ENCODE measurements at regions of chr18 and their contacts with region 1.

Region 1: GRCh38 chr18:8800449-8800848 is 95.1 kb downstream of the MTCL1 start:
- DNase-seq: peak; percentile 97
- H3K4me3 ChIP-seq: no peak overlapping the region
- H3K27ac ChIP-seq: peak overlapping the region; percentile 100
- H3K27me3 ChIP-seq: no peaks in the 10 kb centered on the region
- CTCF ChIP-seq: no peak

Region 2: DNA sequence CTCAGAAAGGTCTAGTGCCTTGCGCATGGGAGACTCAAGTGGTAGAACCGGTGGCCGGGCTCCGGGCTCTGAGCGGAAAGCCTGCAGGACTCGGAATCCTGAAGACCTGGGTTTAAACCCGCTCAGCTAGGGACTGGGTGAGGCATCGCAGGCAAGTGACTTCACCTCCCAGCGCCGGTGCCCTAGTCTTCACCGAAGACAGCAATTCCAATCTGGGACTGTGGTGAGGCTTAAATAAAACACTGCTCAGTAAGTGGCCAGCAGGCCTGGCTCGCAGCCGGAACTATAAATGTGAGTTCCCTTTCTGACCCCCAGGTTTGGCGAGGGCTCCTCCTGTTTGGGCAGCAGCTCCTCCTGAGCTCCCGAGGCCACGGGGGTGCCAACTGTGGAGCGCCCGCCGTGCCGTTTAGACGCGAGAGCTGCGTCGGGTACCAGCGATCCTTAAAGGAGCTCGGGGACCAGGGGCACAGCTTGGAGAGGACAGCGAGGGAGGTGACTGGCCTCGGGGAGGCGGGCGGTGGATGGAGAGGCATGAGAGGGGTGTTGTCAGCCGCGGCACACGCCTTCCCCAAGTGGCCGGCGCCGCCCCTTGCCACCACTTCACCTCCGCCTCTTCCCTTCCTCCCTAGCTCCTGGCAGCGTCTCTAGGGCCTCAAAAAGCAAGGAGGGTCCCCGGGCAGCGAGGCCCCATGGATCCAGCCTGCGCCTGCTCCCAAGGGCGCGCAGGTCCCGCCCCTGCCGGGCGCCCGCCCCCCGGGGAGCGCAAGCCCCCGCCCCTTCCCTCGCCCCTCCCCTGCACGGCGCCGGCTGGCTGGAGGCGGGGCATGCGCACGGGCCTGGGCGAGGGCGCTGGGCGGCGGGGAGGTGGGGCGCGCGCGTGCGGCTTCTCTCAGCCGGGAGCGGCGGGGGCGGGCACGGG is 95.8 kb before region 1 on chr18:
- CTCF ChIA-PET with region 1: interaction called, 5 read pairs
- POLR2A ChIA-PET with region 1: interaction called, 16 read pairs
- DNase-seq: peak; percentile 63
- H3K4me3 ChIP-seq: peak overlapping the region; percentile 56
- H3K27ac ChIP-seq: peak overlapping the region; percentile 87
- H3K27me3 ChIP-seq: no peaks in the 10 kb centered on the region
- CTCF ChIP-seq: no peak

Region 3: GRCh38 chr18:8747440-8747937 is 53.0 kb before region 1 on chr18:
- CTCF ChIA-PET with region 1: no interaction called
- POLR2A ChIA-PET with region 1: interaction called, 22 read pairs
- DNase-seq: peak; percentile 88
- H3K4me3 ChIP-seq: no peak overlapping the region
- H3K27ac ChIP-seq: peak overlapping the region; percentile 95
- H3K27me3 ChIP-seq: no peaks in the 10 kb centered on the region
- CTCF ChIP-seq: no peak

Region 4: DNA sequence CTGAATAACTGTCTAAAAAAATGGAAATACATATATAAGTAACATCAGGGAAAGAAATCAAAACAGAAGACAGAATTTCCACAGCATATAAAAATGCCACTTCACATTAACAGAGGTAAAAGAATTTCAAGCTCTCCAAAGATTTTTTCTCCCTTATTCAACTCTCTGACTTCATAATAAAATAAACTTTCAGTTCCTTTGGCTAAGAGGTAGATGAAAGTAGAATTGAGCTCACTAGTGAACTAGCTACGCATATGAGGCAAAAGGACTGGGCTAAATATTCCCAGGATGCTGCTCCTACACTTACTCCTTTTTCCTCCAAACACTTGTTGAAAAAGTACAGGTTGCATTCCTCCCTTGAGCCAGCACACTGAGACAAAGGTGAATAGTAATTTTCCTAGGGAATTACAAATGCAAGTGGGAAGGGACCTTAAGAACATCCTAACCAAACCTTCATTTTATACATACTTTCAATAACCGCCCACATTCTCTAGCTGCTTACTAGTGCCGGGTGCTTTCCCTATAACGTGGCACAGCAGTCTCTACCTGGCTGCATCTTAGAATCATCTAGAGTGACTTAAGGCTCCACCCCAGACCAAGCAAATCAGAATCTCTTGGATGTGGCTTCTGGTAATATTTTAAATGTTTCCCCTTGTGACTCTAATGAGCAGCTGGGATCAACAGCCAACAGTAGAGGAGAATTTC is 41.5 kb after region 1 on chr18:
- CTCF ChIA-PET with region 1: interaction called, 3 read pairs
- POLR2A ChIA-PET with region 1: interaction called, 16 read pairs
- DNase-seq: no peak
- H3K4me3 ChIP-seq: no peak overlapping the region
- H3K27ac ChIP-seq: peak overlapping the region; percentile 69
- H3K27me3 ChIP-seq: no peaks in the 10 kb centered on the region
- CTCF ChIP-seq: no peak

Region 5: GRCh38 chr18:8988261-8988871 is 187.9 kb after region 1 on chr18:
- CTCF ChIA-PET with region 1: interaction called, 30 read pairs
- POLR2A ChIA-PET with region 1: interaction called, 6 read pairs
- DNase-seq: no peak
- H3K4me3 ChIP-seq: no peak overlapping the region
- H3K27ac ChIP-seq: no peak overlapping the region
- H3K27me3 ChIP-seq: no peaks in the 10 kb centered on the region
- CTCF ChIP-seq: peak; percentile 90

Measured in AG04450 (cell line).